K562 (cell line): ENCODE measurements at regions of chr11 and their contacts with region 1.

Region 1: GRCh38 chr11:12900496-12900895 is 108.6 kb upstream of the RASSF10 start:
- DNase-seq: peak in 1 of 4 experiments; percentile 33
- ATAC-seq: no peak
- H3K4me3 ChIP-seq: no peak overlapping the region
- H3K27ac ChIP-seq: no peak overlapping the region
- H3K4me1 ChIP-seq: no peaks in the 10 kb centered on the region
- H3K27me3 ChIP-seq: no peaks in the 10 kb centered on the region
- CTCF ChIP-seq: no peak
- EP300 ChIP-seq: no peak
- POLR2A ChIP-seq: no peak
- RAD21 ChIP-seq: no peak

Region 2: GRCh38 chr11:12319988-12320387 is 580.5 kb before region 1 on chr11:
- CTCF ChIA-PET with region 1: no interaction called
- POLR2A ChIA-PET with region 1: no interaction called
- in situ Hi-C with region 1: loop called (anchors 10 kb)
- intact Hi-C with region 1: no loop called
- DNase-seq: no peak
- ATAC-seq: no peak
- H3K4me3 ChIP-seq: no peak overlapping the region
- H3K27ac ChIP-seq: no peak overlapping the region
- H3K4me1 ChIP-seq: no peaks in the 10 kb centered on the region
- H3K27me3 ChIP-seq: no peaks in the 10 kb centered on the region
- CTCF ChIP-seq: no peak
- EP300 ChIP-seq: no peak
- POLR2A ChIP-seq: no peak
- RAD21 ChIP-seq: no peak

Region 3: GRCh38 chr11:12787847-12788246 is 112.6 kb before region 1 on chr11:
- CTCF ChIA-PET with region 1: no interaction called
- POLR2A ChIA-PET with region 1: no interaction called
- in situ Hi-C with region 1: no loop called
- intact Hi-C with region 1: no loop called
- DNase-seq: no peak
- ATAC-seq: no peak
- H3K4me3 ChIP-seq: no peak overlapping the region
- H3K27ac ChIP-seq: no peak overlapping the region
- H3K4me1 ChIP-seq: peaks cover 11 to 14% of the 10 kb centered on the region in 2 experiments; a peak in 4 of 5 replicates
- H3K27me3 ChIP-seq: no peaks in the 10 kb centered on the region
- CTCF ChIP-seq: no peak
- EP300 ChIP-seq: no peak
- POLR2A ChIP-seq: no peak
- RAD21 ChIP-seq: no peak

Region 4: DNA sequence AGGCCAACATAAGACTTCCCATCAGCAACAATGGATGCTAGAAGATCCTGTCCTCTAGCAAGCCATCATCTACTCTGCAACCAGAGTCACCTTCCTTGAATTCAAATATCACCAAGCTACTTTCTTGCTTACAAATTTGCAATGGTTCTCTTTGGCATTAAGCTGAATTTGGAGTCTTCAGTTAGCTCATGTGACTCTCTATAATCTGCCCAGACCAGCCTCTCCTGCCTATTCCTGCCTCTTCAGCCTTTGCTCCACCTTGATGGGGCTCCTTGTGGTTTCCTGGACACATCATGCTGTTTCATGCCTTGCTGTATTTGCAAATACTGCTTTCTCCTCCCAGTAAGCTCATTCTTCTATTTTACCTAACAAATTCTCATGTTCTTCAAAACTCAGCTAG is 190.9 kb after region 1 on chr11:
- CTCF ChIA-PET with region 1: no interaction called
- POLR2A ChIA-PET with region 1: no interaction called
- in situ Hi-C with region 1: no loop called
- intact Hi-C with region 1: no loop called
- DNase-seq: peak in 2 of 4 experiments; percentile 47 to 71
- ATAC-seq: peak; percentile 65
- H3K4me3 ChIP-seq: no peak overlapping the region
- H3K27ac ChIP-seq: peak overlapping the region; percentile 68
- H3K4me1 ChIP-seq: peaks cover 4 to 21% of the 10 kb centered on the region in 2 experiments; a peak in 3 of 5 replicates
- H3K27me3 ChIP-seq: no peaks in the 10 kb centered on the region
- CTCF ChIP-seq: no peak
- EP300 ChIP-seq: no peak
- POLR2A ChIP-seq: no peak
- RAD21 ChIP-seq: no peak